ENCODE measurements at regions of chr1 and their contacts with region 1.

Region 1: GRCh38 chr1:184407816-184408537 is 21.1 kb downstream of the C1orf21 start:
- DNase-seq: no peak

Region 2: DNA sequence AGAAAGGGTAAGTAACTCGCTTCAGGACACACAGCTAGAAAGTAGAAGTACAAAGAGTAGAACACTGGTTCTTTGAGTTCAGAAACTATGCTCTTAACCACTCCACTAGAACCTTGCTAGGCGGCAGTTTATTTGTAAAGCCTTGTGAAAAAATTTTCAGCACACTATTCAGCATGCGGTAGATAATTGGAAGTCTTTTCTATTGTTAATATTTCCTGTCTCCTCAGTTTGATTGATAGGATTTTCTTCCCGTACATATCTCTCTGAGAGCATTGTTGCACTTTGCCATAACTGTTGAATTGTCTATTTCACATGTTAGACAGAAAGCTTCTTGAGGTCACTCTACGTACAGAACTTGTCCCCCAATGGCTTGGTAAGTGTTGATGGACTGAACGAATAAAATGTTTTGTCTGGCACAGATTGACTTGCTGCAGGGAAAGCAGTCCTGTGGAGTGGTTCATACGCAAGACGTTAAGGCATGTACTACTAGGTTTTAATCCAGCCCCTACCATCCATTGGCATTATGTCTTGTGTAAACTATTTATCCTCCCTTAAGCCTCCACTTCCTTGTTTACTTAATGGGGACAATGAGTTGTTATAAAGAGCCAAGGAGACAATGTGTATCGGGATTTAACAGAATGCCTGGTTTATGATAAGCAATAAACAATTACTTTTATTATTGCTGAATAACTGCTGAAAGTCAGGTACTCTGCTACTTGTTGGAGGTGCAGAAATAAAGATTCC is 14.7 kb after region 1 on chr1:
- intact Hi-C with region 1: loop called in 1 of 2 experiments (anchors 2 kb)
- DNase-seq: no peak